ENCODE measurements at regions of chr17 and their contacts with region 1.

Region 1: GRCh38 chr17:45277216-45277849 is 15.4 kb upstream of the SPATA32 start:
- DNase-seq: peak; percentile 70
- H3K27ac ChIP-seq: peak overlapping the region; percentile 87
- CTCF ChIP-seq: peak; percentile 90

Region 2: GRCh38 chr17:45265821-45266220 is 11.5 kb before region 1 on chr17:
- CTCF ChIA-PET with region 1: interaction called, 17 read pairs
- POLR2A ChIA-PET with region 1: no interaction called
- DNase-seq: no peak
- H3K27ac ChIP-seq: peak overlapping the region; percentile 66
- CTCF ChIP-seq: no peak

Region 3: GRCh38 chr17:45385331-45385997 is 108.1 kb after region 1 on chr17:
- CTCF ChIA-PET with region 1: interaction called, 58 read pairs
- POLR2A ChIA-PET with region 1: interaction called, 4 read pairs
- DNase-seq: peak; percentile 79
- H3K27ac ChIP-seq: peak overlapping the region; percentile 17
- CTCF ChIP-seq: peak; percentile 97

Region 4: GRCh38 chr17:45910667-45911066 is 633.3 kb after region 1 on chr17:
- CTCF ChIA-PET with region 1: interaction called, 10 read pairs
- POLR2A ChIA-PET with region 1: no interaction called
- DNase-seq: no peak
- H3K27ac ChIP-seq: no peak overlapping the region
- CTCF ChIP-seq: no peak